CD8-positive, alpha-beta T cell (primary cell): ENCODE measurements at regions of chr3 and their contacts with region 1.

Region 1: DNA sequence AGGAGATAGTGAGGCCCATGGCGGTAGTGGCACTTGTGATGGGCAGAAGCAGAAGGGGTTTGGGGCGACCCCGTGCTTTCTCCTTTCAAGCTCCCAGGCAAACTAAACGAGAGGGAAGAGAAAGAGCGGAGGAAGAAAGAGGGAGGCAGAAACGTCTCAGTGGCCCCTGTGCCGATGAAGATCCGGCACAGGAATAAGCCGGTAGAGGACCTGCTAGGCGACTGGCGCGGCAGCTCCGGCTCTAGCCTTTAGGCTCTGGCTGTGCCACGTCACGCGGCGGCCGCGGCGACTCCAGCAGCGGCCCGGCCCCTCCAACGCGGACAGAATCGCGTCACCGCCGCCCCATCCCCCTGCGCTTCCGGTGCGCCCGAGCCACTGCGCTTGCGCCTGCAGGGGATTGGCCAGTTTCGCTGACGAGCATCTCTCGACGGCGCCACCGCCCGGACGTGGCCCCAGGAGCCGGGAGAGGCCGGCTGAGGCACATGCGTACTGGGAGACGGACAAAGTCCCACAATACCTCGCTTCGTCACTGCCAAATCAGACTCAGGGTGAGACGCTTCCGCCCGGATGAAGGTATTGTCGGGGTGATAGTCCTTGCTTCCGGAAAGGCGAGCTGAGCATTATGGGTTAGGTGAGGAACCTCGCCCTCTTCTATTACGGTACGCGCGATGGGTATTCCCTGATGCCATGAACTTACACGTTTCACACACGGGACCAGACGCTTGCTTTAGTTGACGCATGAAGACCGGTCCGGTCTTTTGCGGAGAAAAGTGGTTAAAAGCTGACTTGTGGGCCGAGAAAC is at the start of gene ARF4:
- DNase-seq: peak; percentile 98 to 100 (median 99)
- ATAC-seq: peak; percentile 87
- H3K4me3 ChIP-seq: peak within 1 kb of the TSS; percentile 92 to 95
- H3K4me3 Mint-ChIP-seq: peak within 1 kb of the TSS; percentile 99
- H3K27ac ChIP-seq: peak within 1 kb of the TSS; percentile 93 to 95
- H3K27ac Mint-ChIP-seq: peak within 1 kb of the TSS; percentile 100
- H3K4me1 ChIP-seq: peaks cover 42% of the 10 kb centered on the region
- H3K4me1 Mint-ChIP-seq: peaks cover 58% of the 10 kb centered on the region
- H3K27me3 ChIP-seq: no peaks in the 10 kb centered on the region
- H3K27me3 Mint-ChIP-seq: no peaks in the 10 kb centered on the region
- CTCF ChIP-seq: no peak
- total RNA-seq, gene ARF4: 72.7 to 73.5 TPM

Region 2: DNA sequence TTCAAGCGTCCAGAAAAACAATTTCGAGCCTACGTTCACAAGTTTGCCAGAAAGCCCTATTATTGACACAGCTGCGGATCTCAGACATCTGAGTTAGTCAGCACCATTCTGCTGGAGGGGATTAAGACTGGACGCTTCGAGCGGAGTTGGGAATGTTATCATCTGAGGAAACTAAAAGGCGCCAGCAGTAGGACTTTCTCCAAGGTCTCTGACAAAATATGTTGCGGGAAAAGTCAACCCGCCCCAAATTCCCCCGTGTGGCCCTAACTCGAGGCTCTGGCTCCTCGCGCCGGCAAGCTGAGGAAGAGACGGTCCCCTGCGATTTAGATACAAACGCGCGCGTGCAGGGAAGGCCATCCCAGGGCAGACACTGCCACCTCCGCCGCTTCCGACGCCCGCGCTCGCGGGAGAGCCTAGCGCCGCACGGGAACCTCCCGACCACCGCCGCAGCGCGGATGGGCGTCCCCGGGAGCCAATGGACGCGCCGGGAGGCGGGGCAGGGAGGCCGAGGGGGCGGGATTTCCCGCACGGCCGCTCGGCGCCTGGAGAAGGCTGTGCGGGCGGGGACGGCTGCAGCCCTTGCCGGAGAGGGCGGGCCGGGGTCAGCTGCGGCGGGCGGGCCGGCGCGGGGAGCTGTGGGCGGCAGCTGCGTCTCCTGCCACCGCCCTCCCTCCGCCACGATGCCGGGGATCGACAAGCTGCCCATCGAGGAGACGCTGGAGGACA is 370.0 kb before region 1 on chr3 and contains the start of gene APPL1:
- CTCF ChIA-PET with region 1: no interaction called
- POLR2A ChIA-PET with region 1: no interaction called
- intact Hi-C with region 1: loop called in 1 of 2 experiments (anchors 5 kb)
- DNase-seq: peak; percentile 68 to 93 (median 87)
- ATAC-seq: peak; percentile 89
- H3K4me3 ChIP-seq: peak within 1 kb of the TSS; percentile 82 to 91
- H3K4me3 Mint-ChIP-seq: peak within 1 kb of the TSS; percentile 93
- H3K27ac ChIP-seq: peak within 1 kb of the TSS; percentile 48 to 68
- H3K27ac Mint-ChIP-seq: peak within 1 kb of the TSS; percentile 89
- H3K4me1 ChIP-seq: peaks cover 11% of the 10 kb centered on the region
- H3K4me1 Mint-ChIP-seq: peaks cover 30% of the 10 kb centered on the region
- H3K27me3 ChIP-seq: no peaks in the 10 kb centered on the region
- H3K27me3 Mint-ChIP-seq: no peaks in the 10 kb centered on the region
- CTCF ChIP-seq: no peak
- total RNA-seq, gene APPL1: 19.3 to 23.4 TPM

Region 3: DNA sequence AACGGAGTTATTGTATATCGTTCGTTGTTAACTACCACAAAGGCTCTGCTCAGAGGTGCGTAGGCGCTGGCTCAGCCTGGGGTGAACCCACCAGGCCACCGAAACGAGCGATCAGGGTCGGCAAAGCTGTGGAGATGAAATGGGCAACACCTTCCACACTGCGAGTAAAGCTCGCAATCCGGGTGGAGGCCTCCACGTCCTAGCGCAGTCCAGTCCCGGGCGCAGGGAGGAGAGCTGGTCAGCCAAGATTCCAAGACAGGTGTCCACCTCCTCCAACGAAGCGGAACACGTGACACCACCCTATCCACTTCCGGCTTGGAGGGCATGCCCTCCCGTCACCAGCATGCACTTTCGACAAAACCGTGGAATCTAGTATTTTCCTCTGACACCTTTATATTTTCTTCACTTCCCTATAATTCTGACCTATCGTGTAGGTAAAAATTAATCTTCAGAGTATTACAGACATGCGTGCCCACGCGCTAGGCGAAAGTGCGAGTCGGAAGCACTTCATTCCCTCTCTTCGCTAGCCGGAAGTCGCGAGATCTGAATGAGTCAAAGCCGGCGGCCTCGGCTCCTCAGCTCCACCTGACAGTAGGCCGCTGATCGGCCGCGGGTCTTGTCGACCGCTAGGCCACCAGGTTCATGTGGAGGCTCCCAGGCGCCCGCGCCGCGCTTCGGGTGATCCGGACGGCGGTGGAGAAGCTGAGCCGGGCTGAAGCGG is 41.4 kb before region 1 on chr3 and contains the start of gene PDE12:
- CTCF ChIA-PET with region 1: interaction called, 8 read pairs
- POLR2A ChIA-PET with region 1: interaction called, 43 read pairs
- intact Hi-C with region 1: loop called (anchors 1 kb)
- DNase-seq: peak; percentile 66 to 91 (median 81)
- ATAC-seq: peak; percentile 69
- H3K4me3 ChIP-seq: peak within 1 kb of the TSS; percentile 77 to 96
- H3K4me3 Mint-ChIP-seq: peak within 1 kb of the TSS; percentile 88
- H3K27ac ChIP-seq: peak within 1 kb of the TSS; percentile 87 to 98
- H3K27ac Mint-ChIP-seq: peak within 1 kb of the TSS; percentile 99
- H3K4me1 ChIP-seq: peaks cover 31% of the 10 kb centered on the region
- H3K4me1 Mint-ChIP-seq: peaks cover 40% of the 10 kb centered on the region
- H3K27me3 ChIP-seq: no peaks in the 10 kb centered on the region
- H3K27me3 Mint-ChIP-seq: no peaks in the 10 kb centered on the region
- CTCF ChIP-seq: no peak
- total RNA-seq, gene PDE12: 44.8 to 45.9 TPM

Region 4: GRCh38 chr3:57673156-57673555 is 75.8 kb after region 1 on chr3:
- CTCF ChIA-PET with region 1: no interaction called
- POLR2A ChIA-PET with region 1: no interaction called
- intact Hi-C with region 1: loop called in 1 of 2 experiments (anchors 5 kb)
- DNase-seq: no peak
- ATAC-seq: no peak
- H3K4me3 ChIP-seq: no peak overlapping the region
- H3K4me3 Mint-ChIP-seq: no peak overlapping the region
- H3K27ac ChIP-seq: no peak overlapping the region
- H3K27ac Mint-ChIP-seq: peak overlapping the region; percentile 55
- H3K4me1 ChIP-seq: peaks cover 20% of the 10 kb centered on the region
- H3K4me1 Mint-ChIP-seq: peaks cover 50% of the 10 kb centered on the region
- H3K27me3 ChIP-seq: no peaks in the 10 kb centered on the region
- H3K27me3 Mint-ChIP-seq: no peaks in the 10 kb centered on the region
- CTCF ChIP-seq: no peak

Region 5: DNA sequence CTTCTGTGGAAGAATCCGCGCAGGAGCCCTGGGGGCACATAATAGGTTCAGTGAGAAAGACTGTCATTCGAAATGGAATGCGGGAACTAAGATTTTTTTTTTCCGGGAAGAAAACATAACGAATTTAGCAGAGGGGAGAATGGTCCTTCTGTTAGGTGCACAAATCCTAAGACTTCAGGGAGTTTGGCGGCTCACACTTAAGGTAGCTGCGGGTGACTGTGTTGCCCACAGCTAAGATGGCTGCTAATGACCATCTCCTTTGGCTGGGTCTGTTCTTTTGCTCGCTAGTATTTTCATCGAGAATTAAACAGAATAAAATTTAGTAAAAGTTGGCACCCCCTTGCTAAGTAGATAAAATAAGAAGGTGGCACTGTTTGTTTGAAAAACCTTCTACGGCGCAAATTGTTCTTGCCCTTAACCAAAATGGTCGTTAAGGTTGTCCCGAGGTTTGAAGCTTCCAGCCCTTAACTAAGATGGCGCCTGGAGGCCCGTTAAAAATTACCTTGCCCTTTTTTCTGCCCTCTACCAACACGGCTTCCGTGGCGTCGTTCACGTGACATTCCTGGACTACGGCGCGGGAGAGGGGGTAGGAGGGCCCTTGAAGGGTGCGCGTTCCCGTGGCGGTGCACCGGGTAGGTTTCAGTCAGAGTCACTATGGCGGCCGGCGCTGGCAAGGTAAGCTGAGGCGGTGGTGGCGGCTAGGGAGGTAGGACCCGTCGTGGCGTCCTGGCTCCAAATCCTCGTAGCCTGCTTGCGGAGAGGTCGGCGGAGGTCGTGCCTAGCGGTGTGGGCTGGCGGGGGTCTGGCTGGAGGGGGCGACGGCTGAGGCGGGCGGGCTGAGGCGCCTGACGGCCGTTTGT is 158.6 kb after region 1 on chr3 and contains the start of gene SLMAP:
- CTCF ChIA-PET with region 1: no interaction called
- POLR2A ChIA-PET with region 1: interaction called, 14 read pairs
- intact Hi-C with region 1: loop called in 1 of 2 experiments (anchors 1 kb)
- DNase-seq: peak; percentile 93 to 98 (median 96)
- ATAC-seq: peak; percentile 92
- H3K4me3 ChIP-seq: peak within 1 kb of the TSS; percentile 69 to 80
- H3K4me3 Mint-ChIP-seq: peak within 1 kb of the TSS; percentile 97
- H3K27ac ChIP-seq: peak within 1 kb of the TSS; percentile 45 to 79
- H3K27ac Mint-ChIP-seq: peak within 1 kb of the TSS; percentile 95
- H3K4me1 ChIP-seq: peaks cover 34% of the 10 kb centered on the region
- H3K4me1 Mint-ChIP-seq: peaks cover 44% of the 10 kb centered on the region
- H3K27me3 ChIP-seq: no peaks in the 10 kb centered on the region
- H3K27me3 Mint-ChIP-seq: no peaks in the 10 kb centered on the region
- CTCF ChIP-seq: no peak
- total RNA-seq, gene SLMAP: 55.0 to 56.7 TPM